ENCODE measurements at regions of chr20 and their contacts with region 1.

Region 1: DNA sequence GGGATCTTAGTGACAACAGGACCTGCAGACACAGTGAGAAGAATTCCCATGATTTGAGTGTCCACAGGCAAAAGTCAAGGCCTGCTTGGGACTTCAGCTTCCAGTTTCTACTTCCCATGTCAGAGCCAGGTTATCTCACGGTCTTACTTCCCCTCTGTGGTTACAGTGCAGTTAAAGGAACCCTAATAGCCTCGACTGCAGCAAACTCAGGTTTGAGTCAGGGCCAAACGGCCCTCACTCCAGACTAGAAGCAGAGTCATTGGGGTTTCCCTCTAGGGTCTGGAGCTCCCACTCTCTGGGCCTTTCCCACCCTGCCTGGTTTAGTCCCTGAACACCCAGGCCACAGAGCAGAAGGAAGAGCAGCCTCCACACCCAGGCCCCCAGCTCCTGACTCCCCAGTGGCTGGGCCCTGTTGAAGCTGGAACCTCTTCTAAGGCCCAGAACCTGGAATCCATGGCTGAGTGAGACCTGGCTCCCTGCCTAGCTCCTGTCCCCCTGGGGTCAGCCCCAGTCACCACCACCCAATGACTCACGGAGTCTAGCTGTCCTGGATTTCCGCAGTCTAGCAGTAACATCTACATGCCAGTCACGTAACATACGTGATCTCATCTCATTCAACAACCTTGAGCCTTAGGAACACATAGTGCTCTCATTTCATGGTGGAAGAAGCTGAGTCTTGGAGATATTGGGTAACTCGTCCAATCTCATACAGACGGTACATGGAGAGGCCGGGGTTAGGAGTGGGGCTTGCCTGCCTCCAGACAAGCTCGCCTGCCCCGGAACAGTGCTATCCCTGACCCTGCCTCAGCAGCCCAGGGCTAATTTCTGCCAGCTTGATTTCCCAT is 9.2 kb upstream of the GHRH start:
- DNase-seq: peak; percentile 75
- ATAC-seq: peak; percentile 66
- H3K4me3 ChIP-seq: peak overlapping the region in 2 of 3 experiments; percentile 9 to 43; a peak in 4 of 6 replicates
- H3K27ac ChIP-seq: no peak overlapping the region
- H3K4me1 ChIP-seq: peaks cover 61% of the 10 kb centered on the region
- H3K27me3 ChIP-seq: peaks cover 4 to 14% of the 10 kb centered on the region in 2 experiments; a peak in 4 of 5 replicates
- CTCF ChIP-seq: no peak
- EP300 ChIP-seq: no peak
- POLR2A ChIP-seq: 0 out of 4 replicates have a peak, but pooled peaks of 1 of the 2 experiments have one; percentile 25
- RAD21 ChIP-seq: no peak

Region 2: GRCh38 chr20:37257988-37258387 is 12.8 kb before region 1 on chr20:
- CTCF ChIA-PET with region 1: no interaction called
- POLR2A ChIA-PET with region 1: no interaction called
- in situ Hi-C with region 1: no loop called
- intact Hi-C with region 1: no loop called
- DNase-seq: no peak
- ATAC-seq: peak; percentile 51
- H3K4me3 ChIP-seq: no peak overlapping the region
- H3K27ac ChIP-seq: no peak overlapping the region
- H3K4me1 ChIP-seq: no peaks in the 10 kb centered on the region
- H3K27me3 ChIP-seq: peaks cover 14 to 61% of the 10 kb centered on the region in 2 experiments; a peak in 4 of 5 replicates
- CTCF ChIP-seq: peak; percentile 23; the same call in 1 of the 2 replicates
- EP300 ChIP-seq: no peak
- POLR2A ChIP-seq: no peak
- RAD21 ChIP-seq: no peak

Region 3: GRCh38 chr20:37282556-37282955 is 11.8 kb after region 1 on chr20:
- CTCF ChIA-PET with region 1: no interaction called
- POLR2A ChIA-PET with region 1: interaction called, 35 read pairs
- in situ Hi-C with region 1: no loop called
- intact Hi-C with region 1: loop called (anchors 1 kb)
- DNase-seq: no peak
- ATAC-seq: no peak
- H3K4me3 ChIP-seq: no peak overlapping the region
- H3K27ac ChIP-seq: no peak overlapping the region
- H3K4me1 ChIP-seq: peaks cover 74% of the 10 kb centered on the region
- H3K27me3 ChIP-seq: no peaks in the 10 kb centered on the region
- CTCF ChIP-seq: no peak
- EP300 ChIP-seq: no peak
- POLR2A ChIP-seq: no peak
- RAD21 ChIP-seq: no peak

Region 4: DNA sequence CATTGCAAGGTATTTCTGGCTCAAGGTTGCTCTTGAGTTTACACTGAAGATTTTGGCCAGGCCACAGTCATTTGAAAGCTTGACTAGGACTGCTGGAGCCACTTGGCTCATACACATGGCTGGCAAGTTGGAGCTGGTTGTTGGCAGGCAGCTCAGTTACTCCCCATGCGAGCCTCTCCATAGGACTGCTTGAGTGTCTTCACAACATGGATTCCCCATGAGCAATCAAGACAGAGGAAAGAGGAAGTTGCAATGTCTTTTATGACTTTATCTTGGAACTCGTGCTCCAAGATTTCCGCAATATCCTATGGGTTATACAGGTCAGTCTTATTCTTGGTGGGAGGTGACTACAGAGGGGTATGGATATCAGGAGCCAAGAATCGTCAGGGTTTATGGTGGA is 17.3 kb after region 1 on chr20:
- CTCF ChIA-PET with region 1: no interaction called
- POLR2A ChIA-PET with region 1: interaction called, 35 read pairs
- in situ Hi-C with region 1: no loop called
- intact Hi-C with region 1: loop called (anchors 1 kb)
- DNase-seq: no peak
- ATAC-seq: no peak
- H3K4me3 ChIP-seq: no peak overlapping the region
- H3K27ac ChIP-seq: no peak overlapping the region
- H3K4me1 ChIP-seq: peaks cover 73% of the 10 kb centered on the region
- H3K27me3 ChIP-seq: no peaks in the 10 kb centered on the region; a peak in 1 of 5 replicates
- CTCF ChIP-seq: no peak
- EP300 ChIP-seq: no peak
- POLR2A ChIP-seq: no peak
- RAD21 ChIP-seq: no peak

Region 5: GRCh38 chr20:37378785-37379598 is 108.2 kb after region 1 on chr20:
- CTCF ChIA-PET with region 1: interaction called, 57 read pairs
- POLR2A ChIA-PET with region 1: interaction called, 7 read pairs
- in situ Hi-C with region 1: no loop called
- intact Hi-C with region 1: loop called (anchors 1 kb)
- DNase-seq: no peak
- ATAC-seq: peak; percentile 9; the same call in 2 of the 3 replicates
- H3K4me3 ChIP-seq: no peak overlapping the region
- H3K27ac ChIP-seq: peak overlapping the region; percentile 48
- H3K4me1 ChIP-seq: peaks cover 57% of the 10 kb centered on the region
- H3K27me3 ChIP-seq: no peaks in the 10 kb centered on the region
- CTCF ChIP-seq: no peak
- EP300 ChIP-seq: peak in 1 of 2 experiments; percentile 60; a peak in 2 of 4 replicates
- POLR2A ChIP-seq: no peak
- RAD21 ChIP-seq: no peak

Region 6: DNA sequence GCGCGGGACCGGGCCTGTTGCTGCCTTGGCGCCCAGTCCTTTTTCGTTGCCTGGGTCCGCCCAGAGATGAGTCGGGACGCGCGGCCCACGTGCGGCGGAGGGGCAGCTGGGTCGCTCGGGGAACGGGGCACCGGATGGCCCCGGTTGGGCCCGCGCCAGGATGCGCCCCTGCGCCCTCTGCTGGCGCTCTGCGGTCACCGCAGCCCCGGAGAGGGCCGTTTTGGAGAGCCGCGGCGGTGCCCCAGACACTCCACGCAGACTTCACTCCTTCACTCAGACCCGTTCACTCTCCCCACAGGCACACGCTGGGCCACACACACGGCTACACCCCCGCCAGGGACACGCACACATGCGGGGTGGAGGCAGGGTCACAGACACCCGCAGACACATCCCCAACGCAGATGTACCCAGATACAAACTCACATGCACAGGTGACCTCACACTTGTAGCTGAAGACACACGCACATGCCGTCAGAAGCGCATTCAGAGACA is 113.9 kb after region 1 on chr20:
- CTCF ChIA-PET with region 1: interaction called, 57 read pairs
- POLR2A ChIA-PET with region 1: interaction called, 7 read pairs
- in situ Hi-C with region 1: loop called (anchors 5 kb)
- intact Hi-C with region 1: loop called (anchors 1 kb)
- DNase-seq: no peak
- ATAC-seq: peak; percentile 60
- H3K4me3 ChIP-seq: no peak overlapping the region
- H3K27ac ChIP-seq: no peak overlapping the region
- H3K4me1 ChIP-seq: peaks cover 28% of the 10 kb centered on the region
- H3K27me3 ChIP-seq: no peaks in the 10 kb centered on the region
- CTCF ChIP-seq: peak; percentile 91
- EP300 ChIP-seq: no peak
- POLR2A ChIP-seq: no peak
- RAD21 ChIP-seq: peak; percentile 98

Region 7: DNA sequence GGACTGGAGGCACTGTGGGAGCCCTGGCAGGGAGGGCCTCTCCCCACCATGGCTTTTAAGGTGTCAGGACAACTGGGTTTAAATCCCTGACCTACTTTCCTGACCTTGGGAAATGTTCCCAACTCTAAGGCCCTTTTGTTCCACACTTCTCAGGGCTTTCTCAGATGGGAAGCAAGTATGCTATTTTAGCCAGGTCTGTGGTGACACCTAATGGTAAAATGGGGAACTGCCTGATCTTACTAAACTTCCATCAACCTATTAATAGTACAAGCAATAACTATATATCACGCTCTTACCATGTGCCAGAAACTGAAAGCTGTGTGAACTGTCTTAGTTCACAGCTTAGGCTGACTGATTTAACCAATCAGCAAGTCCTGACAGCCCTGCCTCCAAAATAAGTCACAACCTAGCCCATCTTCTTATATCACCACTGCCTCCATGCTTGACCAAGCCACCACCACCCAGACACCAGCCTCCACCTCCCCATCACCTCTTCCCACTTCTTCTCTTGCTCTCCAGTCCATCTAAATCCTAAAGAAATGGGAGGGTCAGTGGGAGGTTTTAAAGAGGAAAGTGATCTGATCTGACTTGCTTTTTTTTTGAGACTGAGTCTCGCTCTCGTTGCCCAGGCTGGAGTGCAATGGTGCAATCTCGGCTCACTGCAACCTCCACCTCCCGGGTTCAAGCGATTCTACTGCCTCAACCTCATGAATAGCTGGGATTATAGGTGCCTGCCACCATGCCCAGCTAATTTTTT is 263.8 kb after region 1 on chr20:
- CTCF ChIA-PET with region 1: interaction called, 58 read pairs
- POLR2A ChIA-PET with region 1: interaction called, 3 read pairs
- in situ Hi-C with region 1: loop called (anchors 5 kb)
- intact Hi-C with region 1: loop called (anchors 1 kb)
- DNase-seq: peak; percentile 83
- ATAC-seq: peak; percentile 81
- H3K4me3 ChIP-seq: 0 out of 6 replicates have a peak overlapping the region, but pooled peaks of 1 of the 3 experiments have one; percentile 8
- H3K27ac ChIP-seq: no peak overlapping the region
- H3K4me1 ChIP-seq: peaks cover 54% of the 10 kb centered on the region
- H3K27me3 ChIP-seq: no peaks in the 10 kb centered on the region
- CTCF ChIP-seq: peak; percentile 97
- EP300 ChIP-seq: no peak
- POLR2A ChIP-seq: no peak
- RAD21 ChIP-seq: peak; percentile 93

Measured in HepG2 (cell line).